Natural killer cell (primary cell): ENCODE measurements at regions of chr15 and their contacts with region 1.

Region 1: GRCh38 chr15:92097474-92098178 is 244.1 kb downstream of the SLCO3A1 start:
- DNase-seq: peak; percentile 28 to 70
- ATAC-seq: peak; percentile 54 to 60 (median 55)
- H3K4me3 ChIP-seq: no peak overlapping the region
- H3K4me3 Mint-ChIP-seq: peak overlapping the region; percentile 65
- H3K27ac ChIP-seq: no peak overlapping the region
- H3K27ac Mint-ChIP-seq: peak overlapping the region; percentile 73 to 91
- H3K4me1 ChIP-seq: peaks cover 51% of the 10 kb centered on the region
- H3K4me1 Mint-ChIP-seq: peaks cover 73 to 74% of the 10 kb centered on the region in 2 donors
- H3K27me3 ChIP-seq: no peaks in the 10 kb centered on the region
- H3K27me3 Mint-ChIP-seq: no peaks in the 10 kb centered on the region
- CTCF ChIP-seq: peak; percentile 80

Region 2: DNA sequence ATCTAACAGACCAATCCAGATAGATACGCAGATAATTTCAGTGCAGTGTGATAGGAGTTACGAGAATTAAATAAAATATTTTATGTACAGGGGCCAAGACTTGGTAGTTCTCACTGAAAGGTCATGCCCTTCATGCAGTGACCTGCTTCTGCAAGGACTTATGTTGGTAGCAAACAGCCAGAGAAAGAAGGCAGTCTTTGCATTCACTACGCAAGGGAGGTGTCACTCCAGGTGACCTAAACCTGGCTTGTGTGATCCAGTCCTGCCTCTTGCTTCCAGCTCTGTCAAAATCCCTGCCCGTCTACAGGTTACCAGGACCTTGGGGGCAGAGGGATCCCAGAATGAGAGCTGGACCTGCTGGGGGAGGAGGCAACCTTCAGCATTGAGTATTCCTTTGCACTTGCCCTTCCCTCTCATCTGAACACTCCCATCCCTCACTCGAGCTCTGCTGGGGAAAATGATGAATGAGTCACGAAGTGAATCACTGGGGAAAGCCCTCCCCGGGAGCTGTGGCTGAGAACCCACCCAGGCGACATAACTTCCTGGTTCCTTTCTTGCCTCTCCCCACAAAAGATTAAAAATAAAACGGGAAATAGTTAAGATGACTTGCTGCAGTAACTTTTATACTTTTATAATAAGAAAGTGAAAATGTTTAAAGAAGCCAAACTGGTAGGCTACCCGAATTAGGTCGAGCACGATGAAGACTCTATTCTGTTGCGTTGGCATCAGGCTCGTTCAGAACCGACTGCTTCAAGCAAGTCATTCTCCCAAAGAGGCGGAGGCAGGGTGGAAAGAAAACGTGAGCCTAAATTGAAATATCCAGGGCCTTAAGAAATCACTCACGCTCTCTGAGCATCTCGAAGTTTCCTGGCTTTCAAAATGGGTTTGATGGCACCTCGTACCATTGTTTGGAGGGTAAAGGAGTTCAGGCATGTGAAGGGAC is 28.0 kb before region 1 on chr15:
- intact Hi-C with region 1: no loop called
- DNase-seq: peak; percentile 26 to 49
- ATAC-seq: peak; percentile 63 to 88 (median 86)
- H3K4me3 ChIP-seq: no peak overlapping the region
- H3K4me3 Mint-ChIP-seq: peak overlapping the region; percentile 76
- H3K27ac ChIP-seq: peak overlapping the region; percentile 26
- H3K27ac Mint-ChIP-seq: peak overlapping the region; percentile 61 to 82
- H3K4me1 ChIP-seq: peaks cover 36% of the 10 kb centered on the region
- H3K4me1 Mint-ChIP-seq: peaks cover 65 to 87% of the 10 kb centered on the region in 2 donors
- H3K27me3 ChIP-seq: no peaks in the 10 kb centered on the region
- H3K27me3 Mint-ChIP-seq: no peaks in the 10 kb centered on the region
- CTCF ChIP-seq: no peak

Region 3: DNA sequence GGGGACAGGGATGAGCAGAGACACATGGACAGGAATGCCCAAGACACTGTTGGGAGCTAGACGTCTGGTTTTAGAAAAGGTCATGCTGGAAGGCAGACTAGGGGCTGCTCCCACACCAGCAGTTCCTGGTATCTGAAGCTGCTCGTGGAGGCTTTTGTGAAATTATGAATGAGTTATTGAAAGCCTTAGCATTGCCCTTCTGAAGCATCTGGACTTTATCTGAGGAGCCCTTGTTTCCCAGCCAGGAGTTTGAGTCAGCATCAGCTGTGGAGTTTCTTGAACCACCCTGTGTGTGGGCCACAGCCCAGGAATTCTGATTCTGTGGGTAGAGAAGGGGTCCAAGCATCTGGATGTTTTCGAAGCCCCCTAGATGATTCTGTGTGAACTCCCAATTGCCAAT is 14.6 kb after region 1 on chr15:
- intact Hi-C with region 1: no loop called
- DNase-seq: no peak
- ATAC-seq: no peak
- H3K4me3 ChIP-seq: no peak overlapping the region
- H3K4me3 Mint-ChIP-seq: no peak overlapping the region
- H3K27ac ChIP-seq: no peak overlapping the region
- H3K27ac Mint-ChIP-seq: peak overlapping the region in 1 of 2 donors; percentile 51
- H3K4me1 ChIP-seq: no peaks in the 10 kb centered on the region
- H3K4me1 Mint-ChIP-seq: peaks cover 26 to 28% of the 10 kb centered on the region in 2 donors
- H3K27me3 ChIP-seq: no peaks in the 10 kb centered on the region
- H3K27me3 Mint-ChIP-seq: no peaks in the 10 kb centered on the region
- CTCF ChIP-seq: no peak

Region 4: DNA sequence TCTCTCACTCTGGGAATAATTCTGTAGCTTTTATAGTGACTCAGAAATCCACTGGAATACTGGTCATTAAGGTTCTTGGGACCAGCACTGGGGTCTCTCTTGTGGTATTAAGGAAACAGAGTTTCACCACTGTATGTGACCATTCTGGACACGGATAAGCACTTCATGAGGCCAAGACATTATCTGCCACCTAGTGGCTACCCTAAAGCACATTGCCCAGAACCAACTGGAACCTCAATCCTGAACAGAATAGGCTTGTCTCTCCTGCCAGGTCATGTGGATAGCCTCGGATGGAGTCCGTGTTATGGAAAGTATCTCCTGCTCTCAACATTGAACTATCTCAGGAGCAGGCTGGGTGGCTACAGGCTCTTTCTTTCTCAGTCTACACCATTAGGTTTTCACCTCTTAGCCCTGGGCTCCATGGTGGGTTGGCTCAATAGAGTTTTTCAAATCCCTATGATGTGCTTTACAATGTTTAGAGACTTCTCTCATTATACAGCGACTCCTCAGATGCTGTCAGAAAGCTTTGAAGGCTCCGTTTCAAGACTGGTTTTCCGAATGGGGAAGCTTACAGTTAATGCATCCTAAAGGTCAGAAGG is 128.5 kb after region 1 on chr15:
- intact Hi-C with region 1: loop called (anchors 1 kb)
- DNase-seq: peak in 1 of 2 donors; percentile 28
- ATAC-seq: no peak
- H3K4me3 ChIP-seq: no peak overlapping the region
- H3K4me3 Mint-ChIP-seq: no peak overlapping the region
- H3K27ac ChIP-seq: no peak overlapping the region
- H3K27ac Mint-ChIP-seq: no peak overlapping the region
- H3K4me1 ChIP-seq: no peaks in the 10 kb centered on the region
- H3K4me1 Mint-ChIP-seq: no peaks in the 10 kb centered on the region
- H3K27me3 ChIP-seq: no peaks in the 10 kb centered on the region
- H3K27me3 Mint-ChIP-seq: peaks cover 1 to 5% of the 10 kb centered on the region in 2 donors
- CTCF ChIP-seq: no peak

Region 5: DNA sequence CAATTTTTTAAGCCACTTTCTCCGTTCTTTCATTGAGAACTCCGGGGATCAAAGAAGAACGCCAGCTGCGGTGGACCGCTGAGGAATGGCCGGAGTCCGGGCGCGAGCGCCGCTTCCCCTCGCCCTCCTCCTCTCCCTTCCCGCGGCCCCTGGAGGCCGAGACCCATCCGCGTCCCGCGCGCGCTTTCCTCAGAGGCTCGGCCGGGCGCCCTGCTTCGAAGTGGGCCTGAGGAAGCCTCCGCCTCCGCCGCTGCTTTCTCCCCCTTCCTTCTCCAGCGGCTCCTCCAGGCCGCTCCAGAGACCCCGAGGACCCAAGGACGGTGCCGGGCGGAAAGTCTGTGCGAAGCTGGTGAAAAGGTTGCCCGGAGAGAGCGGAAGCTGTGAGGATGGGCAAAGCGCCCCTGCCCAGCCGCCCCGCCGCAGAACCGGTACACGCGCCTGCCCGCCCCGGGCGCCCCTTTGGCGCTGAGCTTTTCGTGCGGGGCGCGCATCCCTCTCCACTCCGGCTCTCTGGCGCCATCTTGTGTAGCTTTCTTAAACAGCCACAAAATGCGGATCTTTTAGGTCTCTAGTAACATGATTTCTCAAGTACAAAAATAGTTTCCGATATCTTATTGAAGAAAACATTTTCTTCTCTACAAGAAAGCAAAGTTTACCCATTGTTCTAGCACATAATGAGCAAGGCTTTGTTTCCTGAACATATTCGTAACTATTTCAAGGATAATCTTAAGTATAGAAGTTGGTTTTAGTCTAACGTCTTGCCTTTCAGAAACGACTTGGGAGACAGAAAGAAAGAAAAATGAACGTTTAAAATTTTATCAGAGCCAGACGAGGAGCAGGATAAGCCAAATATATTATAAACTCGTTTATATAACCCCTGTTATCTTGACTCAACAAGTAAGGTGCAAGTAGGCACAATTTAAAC is 617.1 kb after region 1 on chr15:
- intact Hi-C with region 1: loop called (anchors 1 kb)
- DNase-seq: peak; percentile 56 to 86
- ATAC-seq: peak; percentile 87 to 98 (median 95)
- H3K4me3 ChIP-seq: peak overlapping the region; percentile 7
- H3K4me3 Mint-ChIP-seq: peak overlapping the region; percentile 83
- H3K27ac ChIP-seq: no peak overlapping the region
- H3K27ac Mint-ChIP-seq: no peak overlapping the region
- H3K4me1 ChIP-seq: peaks cover 8% of the 10 kb centered on the region
- H3K4me1 Mint-ChIP-seq: peaks cover 7 to 11% of the 10 kb centered on the region in 2 donors
- H3K27me3 ChIP-seq: peaks cover 10% of the 10 kb centered on the region
- H3K27me3 Mint-ChIP-seq: peaks cover 6 to 11% of the 10 kb centered on the region in 2 donors
- CTCF ChIP-seq: peak; percentile 84